Aorta (tissue), 5 donors: ENCODE measurements at regions of chr13 and their contacts with region 1.

Region 1: GRCh38 chr13:98044301-98044700 is 90.8 kb downstream of the IPO5 start:
- DNase-seq: peak in 1 of 2 donors; percentile 53
- ATAC-seq: no peak
- H3K4me3 ChIP-seq: no peak overlapping the region
- H3K27ac ChIP-seq: no peak overlapping the region
- H3K4me1 ChIP-seq: no peaks in the 10 kb centered on the region
- H3K27me3 ChIP-seq: no peaks in the 10 kb centered on the region

Region 2: GRCh38 chr13:98411681-98412201 is 367.4 kb after region 1 on chr13:
- intact Hi-C with region 1: loop called in 1 of 2 experiments (anchors 10 kb)
- DNase-seq: peak in 1 of 2 donors; percentile 85
- ATAC-seq: no peak
- H3K4me3 ChIP-seq: no peak overlapping the region
- H3K27ac ChIP-seq: no peak overlapping the region
- H3K4me1 ChIP-seq: no peaks in the 10 kb centered on the region
- H3K27me3 ChIP-seq: no peaks in the 10 kb centered on the region